Posterior vena cava (tissue), 2 donors: ENCODE measurements at regions of chr18 and their contacts with region 1.

Region 1: DNA sequence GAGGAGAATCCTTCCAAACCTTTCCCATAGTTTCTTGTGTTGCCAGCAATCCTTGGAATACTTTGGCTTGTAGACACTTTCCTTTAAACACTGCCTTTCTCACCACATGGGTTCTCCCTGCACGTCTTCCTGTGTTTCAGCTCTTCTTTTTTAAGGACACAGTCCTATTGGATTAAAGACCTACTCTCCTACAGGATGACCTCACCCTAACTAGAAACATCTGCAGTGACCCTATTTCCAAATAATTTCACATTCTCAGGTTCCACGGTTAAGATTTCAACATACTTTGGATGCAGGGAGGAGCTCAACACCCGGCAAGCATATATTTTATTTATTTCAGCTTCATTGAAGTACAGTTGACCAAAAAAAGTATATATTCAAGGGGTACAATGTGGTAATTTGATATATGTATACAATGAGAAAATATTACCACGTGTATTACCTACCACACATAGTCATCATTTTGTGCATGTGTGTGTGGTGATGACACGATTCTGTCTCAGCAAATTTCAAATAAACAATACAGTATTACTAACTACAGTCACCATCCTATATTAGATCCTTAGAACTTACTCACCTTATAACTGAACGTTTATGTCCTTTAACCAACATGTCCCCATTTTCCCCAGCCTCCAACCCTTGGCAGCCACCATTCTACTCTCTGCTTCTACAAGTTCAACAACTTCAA is 745.0 kb downstream of the CBLN2 start:
- DNase-seq: no peak

Region 2: DNA sequence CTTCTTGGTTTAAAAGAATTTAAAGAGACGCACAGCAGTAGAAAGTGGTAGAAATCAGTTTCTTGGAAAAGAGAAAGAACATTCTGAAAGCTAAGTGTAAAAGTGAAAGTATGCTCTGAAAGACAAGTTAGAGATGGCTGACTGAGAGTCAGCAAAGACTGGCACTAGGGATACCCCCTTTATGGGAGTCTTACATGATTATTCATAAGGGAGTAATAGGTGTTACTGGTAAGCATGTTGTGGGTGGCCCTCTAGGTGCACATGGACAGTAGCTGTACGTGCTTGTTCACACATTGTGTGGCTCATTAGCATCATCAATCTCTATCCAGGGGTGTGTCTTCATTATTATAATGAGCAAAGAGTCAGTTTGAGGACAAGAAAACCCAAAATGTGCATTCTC is 71.2 kb before region 1 on chr18:
- intact Hi-C with region 1: loop called in 1 of 2 experiments (anchors 2 kb)
- DNase-seq: no peak

Region 3: GRCh38 chr18:71831039-71831438 is 31.9 kb after region 1 on chr18:
- intact Hi-C with region 1: no loop called
- DNase-seq: no peak